ENCODE measurements at regions of chr16 and their contacts with region 1.

Region 1: DNA sequence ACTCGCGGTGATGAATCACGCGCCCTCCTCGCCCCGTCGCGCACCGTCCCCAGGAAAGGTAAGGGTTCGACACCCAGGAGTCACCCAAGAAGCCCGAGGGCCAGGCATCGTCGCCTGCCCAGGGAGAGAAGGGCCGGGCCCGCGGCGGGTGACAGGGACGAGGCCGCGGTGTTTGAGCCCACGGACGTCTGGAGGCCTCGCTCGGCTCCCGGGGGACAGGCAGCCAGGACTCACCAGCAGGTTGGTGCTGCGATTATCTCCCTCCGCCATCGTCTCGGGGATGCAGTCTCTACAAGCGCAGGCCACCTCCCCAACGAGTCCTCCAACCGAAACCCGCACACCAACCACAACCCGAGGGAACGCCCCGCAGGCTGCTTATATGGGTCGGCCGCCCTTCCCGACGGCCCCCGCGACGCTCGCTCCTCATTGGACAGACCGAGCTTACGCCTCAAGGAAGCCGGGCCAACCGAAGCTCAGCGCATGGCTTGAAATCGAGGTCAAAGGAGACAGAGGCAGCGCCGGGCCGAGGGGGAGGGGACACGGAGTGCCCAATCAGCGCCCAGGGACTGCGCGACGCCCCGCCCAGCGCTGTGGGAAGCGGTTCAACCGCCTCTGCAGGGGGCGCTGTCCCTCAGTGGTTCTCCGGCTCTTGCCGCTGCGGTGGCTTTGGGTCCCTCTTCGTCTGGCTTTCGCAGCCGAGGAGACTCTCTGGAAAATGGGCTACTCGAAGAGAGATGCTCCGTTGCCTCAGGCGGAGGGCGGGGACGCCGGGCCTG is at the start of gene ARL6IP1:
- DNase-seq: peak; percentile 100
- H3K4me3 Mint-ChIP-seq: peak within 1 kb of the TSS; percentile 92
- H3K27ac Mint-ChIP-seq: peak within 1 kb of the TSS; percentile 92
- H3K4me1 Mint-ChIP-seq: peaks cover 27% of the 10 kb centered on the region
- H3K27me3 Mint-ChIP-seq: no peaks in the 10 kb centered on the region
- CTCF ChIP-seq: peak; percentile 68
- total RNA-seq, gene ARL6IP1: 120 and 128 TPM in 2 replicates

Region 2: GRCh38 chr16:18816286-18816685 is 14.9 kb after region 1 on chr16:
- CTCF ChIA-PET with region 1: interaction called, 24 read pairs
- POLR2A ChIA-PET with region 1: interaction called, 22 read pairs
- intact Hi-C with region 1: no loop called
- DNase-seq: no peak
- H3K4me3 Mint-ChIP-seq: no peak overlapping the region
- H3K27ac Mint-ChIP-seq: no peak overlapping the region
- H3K4me1 Mint-ChIP-seq: no peaks in the 10 kb centered on the region
- H3K27me3 Mint-ChIP-seq: no peaks in the 10 kb centered on the region
- CTCF ChIP-seq: no peak

Region 3: GRCh38 chr16:18932243-18932981 is 131.0 kb after region 1 on chr16:
- CTCF ChIA-PET with region 1: no interaction called
- POLR2A ChIA-PET with region 1: interaction called, 3 read pairs
- intact Hi-C with region 1: loop called (anchors 5 kb)
- DNase-seq: peak; percentile 39
- H3K4me3 Mint-ChIP-seq: no peak overlapping the region
- H3K27ac Mint-ChIP-seq: peak overlapping the region; percentile 49
- H3K4me1 Mint-ChIP-seq: peaks cover 10% of the 10 kb centered on the region
- H3K27me3 Mint-ChIP-seq: no peaks in the 10 kb centered on the region
- CTCF ChIP-seq: no peak

Region 4: GRCh38 chr16:18969050-18969854 is 167.9 kb after region 1 on chr16:
- CTCF ChIA-PET with region 1: interaction called, 9 read pairs
- POLR2A ChIA-PET with region 1: interaction called, 4 read pairs
- intact Hi-C with region 1: loop called (anchors 1 kb)
- DNase-seq: peak; percentile 81
- H3K4me3 Mint-ChIP-seq: no peak overlapping the region
- H3K27ac Mint-ChIP-seq: no peak overlapping the region
- H3K4me1 Mint-ChIP-seq: peaks cover 6% of the 10 kb centered on the region
- H3K27me3 Mint-ChIP-seq: no peaks in the 10 kb centered on the region
- CTCF ChIP-seq: peak; percentile 82

Region 5: DNA sequence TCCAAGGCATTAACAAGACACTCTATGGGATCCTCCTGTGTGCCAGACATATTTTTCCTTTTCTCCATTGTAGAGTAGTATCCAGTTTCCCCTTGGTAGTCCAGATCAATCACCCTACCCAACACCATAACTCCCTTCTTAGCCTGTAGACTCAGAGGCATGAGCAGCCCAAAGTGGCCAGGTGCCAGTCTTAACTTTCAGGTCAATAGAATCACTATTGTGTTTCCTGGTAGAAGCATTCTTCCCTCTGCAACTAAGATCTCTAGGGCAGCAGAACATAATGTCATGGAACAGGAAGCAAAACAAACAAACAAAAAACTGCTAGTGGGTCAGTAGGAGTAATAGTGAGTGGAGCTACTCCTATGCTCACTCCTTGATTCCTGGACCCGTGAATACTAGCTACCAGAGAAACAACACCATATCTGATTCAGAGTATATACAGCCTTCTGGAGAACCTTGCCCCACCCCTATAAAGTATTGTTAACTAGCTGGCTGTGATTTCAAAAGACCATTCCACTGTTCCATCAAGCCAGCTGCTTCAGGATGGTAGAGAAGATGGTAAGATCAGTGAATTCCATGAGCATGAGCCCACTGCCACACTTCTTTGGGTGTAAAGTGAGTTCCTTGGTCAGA is 472.9 kb after region 1 on chr16:
- CTCF ChIA-PET with region 1: no interaction called
- POLR2A ChIA-PET with region 1: no interaction called
- intact Hi-C with region 1: no loop called
- DNase-seq: no peak
- H3K4me3 Mint-ChIP-seq: no peak overlapping the region
- H3K27ac Mint-ChIP-seq: no peak overlapping the region
- H3K4me1 Mint-ChIP-seq: no peaks in the 10 kb centered on the region
- H3K27me3 Mint-ChIP-seq: no peaks in the 10 kb centered on the region
- CTCF ChIP-seq: no peak

Measured in MCF 10A (cell line).